Cardiac septum (tissue), 1 donor: ENCODE measurements at regions of chr14 and their contacts with region 1.

Region 1: GRCh38 chr14:52060080-52060479 is 8.8 kb downstream of the NID2 start:
- DNase-seq: no peak

Region 2: GRCh38 chr14:51651388-51652167 is 408.5 kb before region 1 on chr14 and contains the start of gene FRMD6:
- intact Hi-C with region 1: loop called (anchors 5 kb)
- DNase-seq: peak; percentile 91
- total RNA-seq, gene FRMD6: 9.1 TPM

Region 3: GRCh38 chr14:52015411-52016030 is 44.6 kb before region 1 on chr14:
- intact Hi-C with region 1: loop called (anchors 2 kb)
- DNase-seq: no peak